Activated CD4-positive, alpha-beta memory T cell treated with anti-CD3 and anti-CD28 coated beads for 36 hours (primary cell): ENCODE measurements at regions of chr1 and their contacts with region 1.

Region 1: DNA sequence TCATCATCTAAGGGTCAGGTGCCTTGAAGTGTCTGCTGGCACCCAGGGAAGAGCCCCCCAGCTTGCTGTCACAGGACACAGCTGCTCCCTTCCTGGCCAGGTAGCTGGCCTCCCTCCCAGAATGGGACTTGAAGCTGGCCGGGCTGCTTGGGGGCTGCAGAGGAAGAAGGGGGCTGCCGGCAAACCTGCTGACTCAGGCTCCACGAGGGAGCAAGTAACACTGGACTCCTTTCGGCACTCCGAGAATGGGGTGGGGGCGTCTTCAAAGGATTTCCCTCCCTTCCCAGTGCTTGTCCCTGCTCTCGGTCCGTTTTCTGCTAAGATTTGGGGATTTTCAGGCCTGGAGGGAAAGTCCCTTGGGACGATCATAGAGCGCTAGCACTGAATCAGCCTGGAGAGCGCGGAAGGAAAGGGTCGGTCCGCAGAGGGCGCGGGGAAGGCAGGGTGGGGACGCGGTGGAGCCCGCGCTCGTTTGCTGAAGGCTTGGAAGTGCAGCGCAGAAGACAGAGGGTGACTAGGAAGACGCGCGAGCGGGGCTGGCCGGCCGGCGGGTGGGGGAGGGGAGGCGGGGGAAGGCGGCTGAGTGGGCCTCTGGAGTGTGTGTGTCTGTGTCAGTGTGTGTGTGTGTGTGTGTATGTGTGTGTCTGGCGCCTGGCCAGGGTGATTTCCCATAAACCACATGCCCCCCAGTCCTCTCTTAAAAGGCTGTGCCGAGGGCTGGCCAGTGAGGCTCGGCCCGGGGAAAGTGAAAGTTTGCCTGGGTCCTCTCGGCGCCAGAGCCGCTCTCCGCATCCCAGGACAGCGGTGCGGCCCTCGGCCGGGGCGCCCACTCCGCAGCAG is at the start of gene CSF1:
- DNase-seq: peak; percentile 80
- H3K4me3 Mint-ChIP-seq: peak within 1 kb of the TSS; percentile 88
- H3K27ac Mint-ChIP-seq: peak within 1 kb of the TSS; percentile 89
- H3K4me1 Mint-ChIP-seq: peaks cover 72% of the 10 kb centered on the region
- H3K27me3 Mint-ChIP-seq: no peaks in the 10 kb centered on the region
- total RNA-seq, gene CSF1: 135 to 140 TPM

Region 2: GRCh38 chr1:109548321-109549267 is 361.7 kb before region 1 on chr1 and contains the start of gene GNAI3:
- CTCF ChIA-PET with region 1: no interaction called
- POLR2A ChIA-PET with region 1: no interaction called
- intact Hi-C with region 1: loop called (anchors 10 kb)
- DNase-seq: peak; percentile 98
- H3K4me3 Mint-ChIP-seq: peak within 1 kb of the TSS; percentile 86
- H3K27ac Mint-ChIP-seq: peak within 1 kb of the TSS; percentile 94
- H3K4me1 Mint-ChIP-seq: peaks cover 41% of the 10 kb centered on the region
- H3K27me3 Mint-ChIP-seq: no peaks in the 10 kb centered on the region
- total RNA-seq, gene GNAI3: 9.2 to 9.9 TPM

Region 3: DNA sequence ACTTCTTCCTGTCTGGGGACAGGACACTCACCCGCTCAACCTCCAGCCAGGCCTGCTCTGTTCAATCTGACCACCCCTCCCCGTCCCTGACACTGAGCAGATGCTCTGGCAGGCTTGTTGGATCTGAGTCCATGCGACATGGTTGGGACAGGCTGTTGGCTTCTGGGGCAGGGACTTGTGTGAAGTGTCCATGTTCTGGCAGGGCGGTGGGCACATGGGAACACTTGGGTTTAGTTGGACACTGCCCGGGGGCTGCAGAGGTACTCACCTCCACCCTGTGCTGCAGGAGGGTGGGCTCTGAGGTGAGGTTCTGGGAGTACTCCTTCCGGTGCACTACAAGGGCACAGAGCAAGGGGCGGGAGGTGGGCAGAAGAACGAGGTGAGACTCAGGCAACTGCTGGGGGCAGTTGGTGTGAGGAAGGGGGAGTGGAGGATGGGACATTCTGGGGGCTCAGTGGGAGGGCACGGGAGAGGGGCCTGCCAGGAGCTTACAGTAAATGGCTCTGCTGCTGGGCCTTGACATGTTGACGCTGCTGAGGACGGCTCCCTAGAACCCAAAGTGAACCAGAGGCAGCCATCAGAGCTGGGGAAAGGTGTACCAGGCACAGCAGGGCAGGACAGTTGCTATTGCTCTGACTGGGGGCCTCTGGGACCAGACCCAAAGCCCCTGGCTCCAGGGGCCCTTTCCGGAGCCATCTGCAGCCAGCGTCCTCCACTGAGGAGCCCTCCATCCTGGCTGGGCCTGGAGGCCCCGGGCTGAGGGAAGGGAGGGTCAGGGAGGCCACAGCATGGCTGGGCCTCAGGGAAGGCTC is 148.9 kb before region 1 on chr1:
- CTCF ChIA-PET with region 1: no interaction called
- POLR2A ChIA-PET with region 1: no interaction called
- intact Hi-C with region 1: no loop called
- DNase-seq: peak; percentile 7
- H3K4me3 Mint-ChIP-seq: no peak overlapping the region
- H3K27ac Mint-ChIP-seq: no peak overlapping the region
- H3K4me1 Mint-ChIP-seq: no peaks in the 10 kb centered on the region
- H3K27me3 Mint-ChIP-seq: no peaks in the 10 kb centered on the region

Region 4: GRCh38 chr1:109790735-109791494 is 119.4 kb before region 1 on chr1:
- CTCF ChIA-PET with region 1: interaction called, 17 read pairs
- POLR2A ChIA-PET with region 1: interaction called, 9 read pairs
- intact Hi-C with region 1: loop called (anchors 1 kb)
- DNase-seq: peak; percentile 93
- H3K4me3 Mint-ChIP-seq: no peak overlapping the region
- H3K27ac Mint-ChIP-seq: peak overlapping the region; percentile 87
- H3K4me1 Mint-ChIP-seq: peaks cover 66% of the 10 kb centered on the region
- H3K27me3 Mint-ChIP-seq: no peaks in the 10 kb centered on the region

Region 5: GRCh38 chr1:109802901-109803561 is 107.3 kb before region 1 on chr1:
- CTCF ChIA-PET with region 1: interaction called, 4 read pairs
- POLR2A ChIA-PET with region 1: interaction called, 17 read pairs
- intact Hi-C with region 1: loop called (anchors 1 kb)
- DNase-seq: peak; percentile 45
- H3K4me3 Mint-ChIP-seq: peak overlapping the region; percentile 70
- H3K27ac Mint-ChIP-seq: peak overlapping the region; percentile 99
- H3K4me1 Mint-ChIP-seq: peaks cover 68% of the 10 kb centered on the region
- H3K27me3 Mint-ChIP-seq: no peaks in the 10 kb centered on the region

Region 6: DNA sequence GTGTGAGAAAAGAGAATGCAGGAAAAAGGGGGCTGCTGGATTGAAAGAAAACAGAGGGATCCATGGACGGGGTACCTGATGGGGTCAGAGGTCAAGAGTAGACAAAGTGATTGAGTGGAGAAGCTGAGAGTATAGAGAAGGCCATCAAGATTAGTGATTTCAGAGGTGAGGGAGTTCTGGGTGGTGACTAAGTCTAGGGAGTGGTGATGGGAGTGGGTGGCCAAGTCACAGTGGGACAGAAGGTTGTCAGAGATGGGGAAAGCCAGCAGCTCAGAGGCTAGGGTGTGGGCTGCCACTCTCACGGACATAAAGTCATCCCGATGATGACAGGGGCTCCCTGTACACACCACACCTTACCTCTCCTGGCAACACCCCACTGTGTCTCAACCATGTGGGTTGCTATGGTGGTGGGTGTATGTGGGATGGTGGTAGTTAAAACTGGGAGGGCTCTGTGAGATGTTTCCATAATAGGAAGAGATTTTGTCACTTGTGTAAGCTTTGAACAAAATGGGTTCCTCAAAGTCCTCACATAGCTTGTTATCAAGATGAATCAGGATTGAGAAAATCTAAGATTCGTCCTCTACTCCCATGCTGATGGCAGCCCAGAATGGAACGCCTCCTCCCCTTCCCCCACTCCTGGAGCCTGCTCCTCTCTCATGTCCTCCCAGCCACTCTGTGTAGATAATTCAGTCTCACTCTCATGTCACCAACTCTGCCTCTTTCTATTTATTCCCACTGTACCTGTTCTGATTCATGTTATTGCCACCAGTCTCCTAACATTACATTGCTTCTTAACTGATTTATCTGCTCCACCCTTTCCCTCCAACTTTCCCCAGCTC is 20.0 kb before region 1 on chr1:
- CTCF ChIA-PET with region 1: interaction called, 4 read pairs
- POLR2A ChIA-PET with region 1: interaction called, 6 read pairs
- intact Hi-C with region 1: loop called (anchors 1 kb)
- DNase-seq: peak; percentile 87
- H3K4me3 Mint-ChIP-seq: peak overlapping the region; percentile 1
- H3K27ac Mint-ChIP-seq: peak overlapping the region; percentile 85
- H3K4me1 Mint-ChIP-seq: peaks cover 35% of the 10 kb centered on the region
- H3K27me3 Mint-ChIP-seq: no peaks in the 10 kb centered on the region

Region 7: DNA sequence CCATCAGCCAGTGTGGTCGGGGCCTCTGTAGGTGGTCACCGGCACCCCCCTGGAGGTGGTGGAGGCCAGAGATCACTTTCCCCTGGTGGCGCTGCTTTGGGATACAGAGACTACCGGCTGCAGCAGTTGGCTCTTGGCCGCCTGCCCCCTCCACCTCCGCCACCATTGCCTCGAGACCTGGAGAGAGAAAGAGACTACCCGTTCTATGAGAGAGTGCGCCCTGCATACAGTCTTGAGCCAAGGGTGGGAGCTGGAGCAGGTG is 429.8 kb after region 1 on chr1:
- CTCF ChIA-PET with region 1: no interaction called
- POLR2A ChIA-PET with region 1: no interaction called
- intact Hi-C with region 1: no loop called
- DNase-seq: no peak
- H3K4me3 Mint-ChIP-seq: no peak overlapping the region
- H3K27ac Mint-ChIP-seq: no peak overlapping the region
- H3K4me1 Mint-ChIP-seq: peaks cover 66% of the 10 kb centered on the region
- H3K27me3 Mint-ChIP-seq: no peaks in the 10 kb centered on the region